Brain microvascular endothelial cell (primary cell): ENCODE measurements at regions of chr11 and their contacts with region 1.

Region 1: DNA sequence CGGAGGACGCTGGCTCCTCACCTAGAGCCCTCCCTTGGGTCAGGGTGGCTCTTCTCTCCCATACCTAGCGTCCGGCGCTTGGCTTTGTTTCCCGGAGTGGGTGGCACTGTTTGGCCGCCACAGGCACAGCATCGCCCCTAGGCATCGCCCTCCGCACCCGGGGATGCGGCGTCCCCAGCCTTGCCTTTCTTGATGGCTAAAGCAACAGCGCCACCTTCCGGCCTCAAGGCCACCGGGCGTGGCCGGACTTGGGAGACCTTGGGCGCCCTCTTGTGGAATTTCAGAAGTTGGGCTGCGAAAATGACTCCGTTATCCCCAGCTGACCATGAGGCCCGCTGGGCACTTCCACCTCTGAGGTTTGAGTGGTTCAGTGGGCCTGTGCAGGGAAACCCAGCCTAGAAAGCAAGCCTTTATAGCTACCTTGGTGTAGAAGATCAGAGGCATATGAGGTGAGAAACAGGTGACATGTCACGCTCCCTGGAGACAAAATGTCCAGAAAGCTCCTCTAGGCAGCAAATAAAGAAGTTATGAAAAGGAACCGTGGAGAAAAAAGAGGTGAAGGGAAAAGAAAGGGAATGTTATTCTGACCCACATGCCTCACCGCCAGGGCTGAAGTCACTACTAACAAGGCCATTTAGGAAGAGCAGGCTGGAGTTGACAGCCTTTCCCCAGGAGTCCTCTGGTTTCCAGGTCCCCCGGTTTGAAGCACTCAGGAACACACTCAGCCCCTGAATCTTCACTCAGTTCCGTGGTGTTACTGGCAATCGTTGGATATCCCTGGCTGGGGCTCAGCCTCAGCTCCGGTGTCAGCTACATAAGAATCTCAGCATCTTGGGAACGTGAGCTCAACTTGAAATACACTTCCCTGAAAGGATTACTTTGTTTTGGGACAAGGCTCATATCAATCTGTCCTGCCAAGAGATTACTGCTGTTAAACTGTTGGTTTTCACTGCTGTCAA is 54.1 kb downstream of the SNX19 start:
- DNase-seq: peak; percentile 70
- H3K4me3 ChIP-seq: peak overlapping the region; percentile 22
- H3K27ac ChIP-seq: no peak overlapping the region
- H3K27me3 ChIP-seq: no peaks in the 10 kb centered on the region
- CTCF ChIP-seq: peak; percentile 100

Region 2: GRCh38 chr11:130448416-130449309 is 413.5 kb before region 1 on chr11 and contains the start of gene ADAMTS15:
- in situ Hi-C with region 1: loop called (anchors 10 kb)
- DNase-seq: peak; percentile 61
- H3K4me3 ChIP-seq: peak within 1 kb of the TSS; percentile 58
- H3K27ac ChIP-seq: no peak within 1 kb of the TSS
- H3K27me3 ChIP-seq: no peaks in the 10 kb centered on the region
- CTCF ChIP-seq: no peak